GM12878 (cell line): ENCODE measurements at regions of chr10 and their contacts with region 1.

Region 1: DNA sequence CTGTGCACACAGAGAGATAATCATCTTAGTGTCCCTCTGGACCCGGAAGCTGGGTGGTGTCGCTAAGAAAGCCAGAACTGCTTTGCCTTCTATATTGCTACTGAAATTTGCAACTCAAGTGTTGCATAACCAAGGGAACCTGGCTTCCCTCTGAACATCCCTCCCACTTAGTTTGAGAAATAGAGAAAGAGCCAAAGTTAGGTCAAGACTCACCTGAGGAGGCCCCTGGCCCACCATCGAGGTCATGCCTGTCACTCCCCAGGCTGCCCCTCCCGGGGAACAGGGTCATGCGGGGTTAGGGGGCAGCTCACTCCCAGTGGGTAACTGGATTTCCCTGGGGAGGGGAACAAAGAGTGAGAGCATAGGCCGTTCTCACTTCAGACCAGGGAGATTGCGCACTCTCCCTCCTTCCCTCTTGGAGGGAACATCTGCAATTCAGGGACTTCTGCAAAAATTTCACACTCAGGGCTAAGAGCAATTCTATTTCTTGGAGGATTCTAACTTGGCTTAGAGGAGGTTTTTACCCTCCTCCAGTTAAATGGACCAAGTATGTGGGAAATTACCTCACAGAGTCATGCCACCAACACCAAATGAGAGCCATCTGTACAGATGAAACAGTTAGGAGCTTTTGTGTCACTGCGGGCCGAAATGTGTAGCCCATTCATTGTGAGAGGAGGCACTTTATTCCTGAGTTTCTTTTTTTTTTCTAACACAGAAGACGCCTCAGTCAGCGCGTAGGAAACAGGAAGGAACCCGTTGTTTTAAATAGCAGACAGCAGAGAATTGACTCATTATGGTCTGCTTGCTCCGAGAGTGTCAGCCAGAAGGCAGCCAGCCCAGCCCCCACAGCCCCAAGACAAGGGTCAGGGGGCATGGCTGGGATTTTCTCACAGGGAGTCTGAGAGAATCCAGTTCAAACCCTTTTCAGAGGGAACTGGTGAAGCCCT is 221.3 kb downstream of the ARHGAP12 start:
- DNase-seq: peak; percentile 90
- ATAC-seq: peak; percentile 93
- H3K4me3 ChIP-seq: peak overlapping the region; percentile 52
- H3K27ac ChIP-seq: peak overlapping the region; percentile 92
- H3K4me1 ChIP-seq: peaks cover 31% of the 10 kb centered on the region
- H3K27me3 ChIP-seq: no peaks in the 10 kb centered on the region
- CTCF ChIP-seq: no peak
- EP300 ChIP-seq: peak; percentile 80 to 88
- POLR2A ChIP-seq: no peak
- RAD21 ChIP-seq: peak; percentile 28; the same call in 1 of the 2 replicates

Region 2: GRCh38 chr10:31593124-31593523 is 114.2 kb before region 1 on chr10:
- CTCF ChIA-PET with region 1: no interaction called
- POLR2A ChIA-PET with region 1: no interaction called
- RAD21 ChIA-PET with region 1: no interaction called
- SMC1A ChIA-PET with region 1: interaction called, 4 read pairs
- in situ Hi-C with region 1: no loop called
- intact Hi-C with region 1: loop called (anchors 2 kb)
- DNase-seq: no peak
- ATAC-seq: no peak
- H3K4me3 ChIP-seq: no peak overlapping the region
- H3K27ac ChIP-seq: no peak overlapping the region
- H3K4me1 ChIP-seq: peaks cover 8% of the 10 kb centered on the region
- H3K27me3 ChIP-seq: no peaks in the 10 kb centered on the region
- CTCF ChIP-seq: no peak
- EP300 ChIP-seq: no peak
- POLR2A ChIP-seq: no peak
- RAD21 ChIP-seq: no peak

Region 3: DNA sequence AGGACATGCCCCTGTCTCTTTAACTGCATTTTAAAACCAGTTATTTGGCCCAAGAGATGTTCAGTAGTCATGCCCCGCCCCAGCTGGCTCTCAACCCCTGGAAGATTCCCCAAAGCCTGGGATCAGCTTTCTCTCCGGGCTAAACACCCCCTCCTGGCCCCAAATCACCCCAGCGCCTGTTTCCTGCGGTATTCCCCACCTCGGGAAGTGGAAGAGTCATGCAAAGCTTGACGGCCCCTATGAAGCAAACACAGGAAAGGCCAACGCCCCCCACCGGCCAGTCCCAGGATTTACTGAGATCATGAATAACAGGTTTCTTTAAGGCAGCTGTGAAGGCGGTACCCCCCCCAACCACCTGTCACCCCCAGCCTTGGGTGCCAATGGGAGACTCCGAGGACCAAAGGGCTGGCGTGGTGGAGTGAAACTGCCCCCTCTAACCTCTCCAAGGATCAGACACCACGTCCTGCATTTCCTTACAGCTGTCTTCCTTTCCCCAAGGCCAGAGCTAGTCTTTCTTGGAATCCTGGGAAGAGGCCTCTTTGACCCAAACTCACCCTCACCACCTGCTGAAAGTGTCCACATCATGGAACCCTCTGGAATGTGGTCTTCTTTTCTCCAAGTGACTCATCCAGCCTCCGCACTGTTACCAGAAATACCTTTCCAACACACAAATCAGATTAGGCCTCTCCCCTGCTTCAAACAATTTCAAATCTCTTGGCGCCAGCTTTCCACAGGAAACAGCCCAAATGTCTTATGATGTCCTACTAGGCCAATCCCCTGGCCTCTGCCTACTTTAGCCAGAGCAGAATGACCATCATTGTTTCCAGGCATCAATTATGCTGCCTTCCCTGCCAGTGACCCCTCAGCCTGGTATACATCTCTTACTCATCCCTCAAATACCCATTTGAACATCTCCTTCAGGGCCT is 86.9 kb before region 1 on chr10:
- CTCF ChIA-PET with region 1: no interaction called
- POLR2A ChIA-PET with region 1: no interaction called
- RAD21 ChIA-PET with region 1: no interaction called
- SMC1A ChIA-PET with region 1: no interaction called
- in situ Hi-C with region 1: no loop called
- intact Hi-C with region 1: no loop called
- DNase-seq: no peak
- ATAC-seq: no peak
- H3K4me3 ChIP-seq: no peak overlapping the region
- H3K27ac ChIP-seq: no peak overlapping the region
- H3K4me1 ChIP-seq: peaks cover 11% of the 10 kb centered on the region; the same call in 1 of the 2 replicates
- H3K27me3 ChIP-seq: no peaks in the 10 kb centered on the region
- CTCF ChIP-seq: no peak
- EP300 ChIP-seq: no peak
- POLR2A ChIP-seq: no peak
- RAD21 ChIP-seq: no peak

Region 4: GRCh38 chr10:31759799-31760626 is 52.6 kb after region 1 on chr10:
- CTCF ChIA-PET with region 1: no interaction called
- POLR2A ChIA-PET with region 1: interaction called, 3 read pairs
- RAD21 ChIA-PET with region 1: no interaction called
- SMC1A ChIA-PET with region 1: no interaction called
- in situ Hi-C with region 1: no loop called
- intact Hi-C with region 1: loop called (anchors 2 kb)
- DNase-seq: peak; percentile 77
- ATAC-seq: peak; percentile 97
- H3K4me3 ChIP-seq: peak overlapping the region; percentile 90
- H3K27ac ChIP-seq: peak overlapping the region; percentile 79
- H3K4me1 ChIP-seq: peaks cover 3% of the 10 kb centered on the region; the same call in 1 of the 2 replicates
- H3K27me3 ChIP-seq: no peaks in the 10 kb centered on the region
- CTCF ChIP-seq: no peak
- EP300 ChIP-seq: no peak
- POLR2A ChIP-seq: peak; percentile 84
- RAD21 ChIP-seq: no peak

Region 5: GRCh38 chr10:31770307-31770902 is 63.0 kb after region 1 on chr10:
- CTCF ChIA-PET with region 1: interaction called, 21 read pairs
- POLR2A ChIA-PET with region 1: no interaction called
- RAD21 ChIA-PET with region 1: interaction called, 10 read pairs
- SMC1A ChIA-PET with region 1: interaction called, 11 read pairs
- in situ Hi-C with region 1: no loop called
- intact Hi-C with region 1: loop called (anchors 2 kb)
- DNase-seq: no peak
- ATAC-seq: peak; percentile 92
- H3K4me3 ChIP-seq: no peak overlapping the region
- H3K27ac ChIP-seq: no peak overlapping the region
- H3K4me1 ChIP-seq: no peaks in the 10 kb centered on the region
- H3K27me3 ChIP-seq: no peaks in the 10 kb centered on the region
- CTCF ChIP-seq: peak; percentile 79 to 88 (median 86)
- EP300 ChIP-seq: no peak
- POLR2A ChIP-seq: no peak
- RAD21 ChIP-seq: peak; percentile 86